CD8-positive, alpha-beta T cell (primary cell): ENCODE measurements at regions of chr20 and their contacts with region 1.

Region 1: GRCh38 chr20:54649511-54649962 is 174.1 kb downstream of the DOK5 start:
- DNase-seq: peak; percentile 22 to 61 (median 50)
- ATAC-seq: no peak
- H3K4me3 ChIP-seq: no peak overlapping the region
- H3K4me3 Mint-ChIP-seq: no peak overlapping the region
- H3K27ac ChIP-seq: no peak overlapping the region
- H3K27ac Mint-ChIP-seq: no peak overlapping the region
- H3K4me1 ChIP-seq: no peaks in the 10 kb centered on the region
- H3K4me1 Mint-ChIP-seq: no peaks in the 10 kb centered on the region
- H3K27me3 ChIP-seq: no peaks in the 10 kb centered on the region
- H3K27me3 Mint-ChIP-seq: peaks cover 9% of the 10 kb centered on the region
- CTCF ChIP-seq: peak; percentile 60

Region 2: DNA sequence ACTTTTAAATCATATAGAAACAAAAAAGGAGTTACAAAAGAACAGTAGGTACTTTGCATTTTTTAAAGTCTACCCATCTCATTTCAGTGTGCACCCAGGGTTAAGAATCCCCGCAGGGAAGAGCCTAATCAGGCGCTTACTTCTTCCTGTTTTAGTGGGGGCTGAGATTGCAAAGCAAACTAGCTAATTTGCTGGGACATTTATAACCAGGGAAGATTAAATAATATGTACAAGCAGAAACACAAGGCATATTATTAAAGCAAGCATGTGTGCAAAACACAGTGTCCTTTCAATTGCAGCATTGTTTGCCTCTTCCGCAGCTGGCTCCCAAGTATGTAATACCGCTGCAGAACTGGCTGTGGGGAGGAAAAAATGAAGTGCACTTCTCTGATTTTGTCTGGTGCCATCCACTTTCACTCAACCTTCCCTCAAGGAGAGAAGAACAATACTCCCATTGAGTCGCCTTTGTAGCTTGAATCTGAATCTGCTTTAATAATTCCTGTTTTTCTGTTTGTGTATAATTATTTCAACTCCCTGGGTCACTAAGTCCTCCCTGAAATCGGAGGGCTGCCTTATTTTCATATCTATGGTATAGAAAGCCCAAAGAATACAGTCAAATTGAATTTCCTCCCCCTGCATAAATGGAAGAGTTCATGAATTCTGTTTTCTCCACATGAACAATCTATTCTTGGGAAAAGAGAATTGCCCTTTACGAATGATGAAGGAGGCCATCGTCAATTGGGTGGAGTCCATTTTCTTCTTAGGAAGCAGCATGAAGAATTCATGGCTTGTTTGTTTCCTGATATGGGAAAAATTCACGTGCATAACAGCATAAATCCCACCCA is 555.9 kb before region 1 on chr20:
- CTCF ChIA-PET with region 1: interaction called, 9 read pairs
- POLR2A ChIA-PET with region 1: no interaction called
- intact Hi-C with region 1: loop called in 1 of 2 experiments (anchors 2 kb)
- DNase-seq: no peak
- ATAC-seq: no peak
- H3K4me3 ChIP-seq: no peak overlapping the region
- H3K4me3 Mint-ChIP-seq: no peak overlapping the region
- H3K27ac ChIP-seq: no peak overlapping the region
- H3K27ac Mint-ChIP-seq: no peak overlapping the region
- H3K4me1 ChIP-seq: no peaks in the 10 kb centered on the region
- H3K4me1 Mint-ChIP-seq: peaks cover 2% of the 10 kb centered on the region
- H3K27me3 ChIP-seq: no peaks in the 10 kb centered on the region
- H3K27me3 Mint-ChIP-seq: peaks cover 7% of the 10 kb centered on the region
- CTCF ChIP-seq: no peak

Region 3: GRCh38 chr20:54219751-54220426 is 429.6 kb before region 1 on chr20:
- CTCF ChIA-PET with region 1: interaction called, 3 read pairs
- POLR2A ChIA-PET with region 1: no interaction called
- intact Hi-C with region 1: loop called in 1 of 2 experiments (anchors 5 kb)
- DNase-seq: no peak
- ATAC-seq: no peak
- H3K4me3 ChIP-seq: no peak overlapping the region
- H3K4me3 Mint-ChIP-seq: no peak overlapping the region
- H3K27ac ChIP-seq: no peak overlapping the region
- H3K27ac Mint-ChIP-seq: no peak overlapping the region
- H3K4me1 ChIP-seq: peaks cover 17% of the 10 kb centered on the region
- H3K4me1 Mint-ChIP-seq: peaks cover 24% of the 10 kb centered on the region
- H3K27me3 ChIP-seq: no peaks in the 10 kb centered on the region
- H3K27me3 Mint-ChIP-seq: no peaks in the 10 kb centered on the region
- CTCF ChIP-seq: no peak

Region 4: DNA sequence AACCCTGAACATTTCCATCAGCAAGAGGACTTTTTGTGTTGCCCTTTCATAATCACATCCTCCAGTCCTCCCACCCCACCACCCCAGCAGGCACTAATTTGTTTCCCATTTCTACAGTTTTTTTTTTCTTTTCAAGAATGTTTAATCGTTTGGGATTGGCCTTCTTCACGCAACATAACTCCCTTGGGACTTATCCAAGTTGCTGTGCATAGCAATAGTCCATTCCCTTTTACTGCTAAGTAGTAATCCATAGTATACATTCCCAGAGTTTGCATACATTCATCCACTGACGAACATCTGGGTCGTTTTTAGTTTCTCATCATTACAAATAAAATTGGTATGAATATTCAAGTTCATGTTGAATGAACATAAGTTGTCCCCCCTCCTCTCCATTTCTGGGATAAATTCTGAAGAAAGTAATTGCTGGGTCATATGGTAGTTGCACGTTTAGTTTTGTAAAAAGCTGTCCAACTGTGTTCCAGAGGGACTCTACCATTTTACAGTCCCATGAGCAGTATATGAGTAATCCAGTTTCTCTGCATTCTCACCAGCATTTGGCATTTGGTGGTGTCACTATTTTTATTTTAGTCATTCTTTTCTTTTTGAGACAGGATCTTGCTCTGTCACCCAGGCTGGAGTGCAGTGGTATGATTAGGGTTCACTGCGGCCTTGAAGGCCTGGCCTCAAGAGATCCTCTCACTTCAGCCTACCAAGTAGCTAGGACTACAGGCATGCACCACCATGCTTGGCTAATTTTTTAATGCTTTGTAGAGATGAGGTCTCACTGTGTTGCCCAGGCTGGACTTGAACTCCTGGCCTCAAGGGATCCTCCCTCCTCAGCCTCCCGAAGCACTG is 83.3 kb before region 1 on chr20:
- CTCF ChIA-PET with region 1: no interaction called
- POLR2A ChIA-PET with region 1: no interaction called
- intact Hi-C with region 1: no loop called
- DNase-seq: no peak
- ATAC-seq: no peak
- H3K4me3 ChIP-seq: no peak overlapping the region
- H3K4me3 Mint-ChIP-seq: no peak overlapping the region
- H3K27ac ChIP-seq: no peak overlapping the region
- H3K27ac Mint-ChIP-seq: no peak overlapping the region
- H3K4me1 ChIP-seq: no peaks in the 10 kb centered on the region
- H3K4me1 Mint-ChIP-seq: no peaks in the 10 kb centered on the region
- H3K27me3 ChIP-seq: no peaks in the 10 kb centered on the region
- H3K27me3 Mint-ChIP-seq: no peaks in the 10 kb centered on the region
- CTCF ChIP-seq: no peak